Posterior vena cava (tissue), 2 donors: ENCODE measurements at regions of chr3 and their contacts with region 1.

Region 1: DNA sequence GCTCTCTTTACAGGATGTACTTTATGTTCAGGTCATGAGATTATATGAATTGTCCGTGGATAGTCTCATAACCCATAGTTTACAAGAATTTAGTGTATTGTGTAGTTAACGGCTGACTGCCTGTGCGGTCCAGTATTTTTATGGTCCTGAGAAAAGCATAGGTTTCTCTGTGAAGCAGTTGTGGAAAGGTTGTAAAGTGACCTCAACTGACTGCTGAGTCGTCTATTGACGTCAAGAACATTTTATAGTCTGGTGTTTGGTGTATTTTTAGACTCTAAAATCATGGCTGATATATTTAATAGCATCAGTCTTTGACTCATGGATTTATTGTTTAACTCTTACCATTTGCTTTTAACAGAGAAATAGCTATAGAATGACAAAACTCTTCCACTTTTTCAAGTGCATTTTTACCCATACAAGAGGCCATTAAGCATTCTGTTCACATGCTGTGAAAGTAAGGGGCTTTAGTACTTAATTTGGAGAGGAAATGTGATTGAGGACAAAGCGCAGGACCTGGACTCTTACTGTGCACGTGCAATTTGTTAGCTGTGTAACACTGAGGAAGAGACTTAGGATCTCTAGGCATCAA is 240.7 kb downstream of the NFKBIZ start:
- DNase-seq: no peak

Region 2: DNA sequence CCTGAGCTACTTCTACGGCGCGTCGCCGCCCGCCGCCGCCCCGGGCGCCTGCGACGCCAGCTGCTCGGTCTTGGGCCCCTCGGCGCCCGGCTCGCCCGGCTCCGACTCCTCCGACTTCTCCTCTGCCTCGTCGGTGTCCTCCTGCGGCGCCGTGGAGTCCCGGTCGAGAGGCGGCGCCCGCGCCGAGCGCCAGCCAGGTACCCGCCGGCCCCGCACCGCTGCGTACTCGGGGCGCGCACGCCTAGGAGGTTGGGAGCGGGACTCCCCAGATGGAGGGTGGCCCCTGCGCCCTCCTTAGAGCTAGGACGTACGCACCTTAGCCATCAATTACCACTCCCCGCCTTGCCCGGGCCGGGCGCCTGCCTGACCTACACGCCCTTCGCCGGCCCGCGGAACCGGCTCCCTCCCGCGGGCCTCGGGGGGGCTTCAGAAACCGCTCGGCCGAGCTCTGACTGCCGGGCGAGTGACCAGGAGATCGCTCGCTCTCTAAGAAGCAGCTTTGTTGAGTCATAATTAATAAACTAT is 240.2 kb before region 1 on chr3:
- intact Hi-C with region 1: loop called in 1 of 2 experiments (anchors 10 kb)
- DNase-seq: peak; percentile 89

Region 3: DNA sequence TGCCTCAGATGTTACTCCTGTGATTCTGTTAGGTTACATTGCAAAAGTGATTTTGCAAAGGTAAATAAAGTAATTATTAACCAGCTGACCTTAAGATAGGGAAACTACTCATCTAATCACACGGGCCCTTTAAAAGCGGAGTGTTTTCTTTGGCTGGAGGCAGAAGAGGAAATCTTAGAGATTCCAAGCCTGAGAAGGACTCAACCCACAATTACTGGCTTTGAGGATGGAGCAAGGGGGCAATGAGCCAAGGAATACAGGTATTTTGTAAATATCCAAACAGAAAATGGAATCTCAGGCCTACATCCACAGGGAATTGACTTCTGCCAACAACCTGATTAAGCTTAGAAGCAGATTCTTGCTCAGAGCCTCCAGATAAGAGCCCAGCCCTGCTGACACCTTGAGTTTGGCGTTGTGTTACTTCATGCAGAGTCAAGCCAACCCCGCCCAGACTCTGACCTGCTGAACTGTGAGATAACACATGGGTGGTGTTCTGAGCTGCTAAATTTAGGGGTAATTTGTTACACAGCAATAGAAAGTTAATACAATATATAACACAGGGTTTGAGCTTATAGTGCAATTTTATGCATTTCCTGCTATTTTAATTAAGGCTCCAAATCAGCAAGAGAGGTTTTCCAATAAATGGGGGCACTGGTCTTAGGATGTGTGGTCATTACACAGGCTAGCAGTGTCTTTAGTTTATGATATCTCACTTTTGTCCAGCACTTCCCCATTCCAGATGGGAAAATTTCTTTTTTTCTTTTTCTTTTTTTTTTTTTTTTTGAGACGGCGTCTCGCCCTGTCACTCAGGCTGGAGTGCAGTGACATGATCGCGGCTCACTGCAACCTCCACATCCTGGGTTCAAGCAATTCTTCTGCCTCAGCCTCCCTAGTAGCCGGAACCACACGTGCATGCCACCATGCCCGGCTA is 221.2 kb before region 1 on chr3:
- intact Hi-C with region 1: loop called in 1 of 2 experiments (anchors 10 kb)
- DNase-seq: no peak

Region 4: GRCh38 chr3:102129760-102130608 is 40.0 kb after region 1 on chr3:
- intact Hi-C with region 1: no loop called
- DNase-seq: no peak

Region 5: DNA sequence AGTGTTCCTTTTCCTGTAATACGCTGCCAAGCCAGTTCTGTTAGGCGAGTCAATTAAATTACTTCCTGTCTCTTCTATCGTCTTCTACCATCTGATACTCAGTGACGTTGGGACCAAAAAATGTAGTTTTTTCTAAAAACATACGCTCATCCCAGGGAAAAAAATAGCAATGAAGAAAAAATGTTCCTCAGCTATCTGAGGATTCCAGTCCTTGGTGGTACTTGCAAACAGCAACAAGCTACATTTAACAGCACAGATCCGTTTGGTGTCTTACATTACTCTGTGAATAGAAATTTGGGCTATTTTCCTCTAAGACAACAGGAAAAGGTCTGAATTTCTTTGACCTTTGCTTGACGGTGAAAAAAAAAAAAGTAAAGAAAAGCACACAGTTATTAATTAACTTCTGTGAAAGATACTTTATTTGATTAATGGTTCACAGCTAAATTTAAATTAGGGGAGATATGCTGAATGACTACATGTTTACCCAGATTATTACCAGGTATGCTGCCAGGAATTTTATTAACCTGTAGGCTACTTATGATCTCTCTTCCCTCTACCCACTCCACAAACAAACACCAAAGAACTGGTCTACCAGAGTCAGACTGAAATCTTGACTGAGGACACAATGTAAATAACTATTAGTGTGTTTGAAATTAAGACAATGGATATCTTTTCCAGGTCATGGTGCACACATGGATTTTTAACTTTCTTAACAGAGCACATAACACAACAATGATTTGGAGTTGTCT is 90.5 kb after region 1 on chr3:
- intact Hi-C with region 1: loop called in 1 of 2 experiments (anchors 10 kb)
- DNase-seq: no peak